PC-3 (cell line): ENCODE measurements at regions of chr2 and their contacts with region 1.

Region 1: DNA sequence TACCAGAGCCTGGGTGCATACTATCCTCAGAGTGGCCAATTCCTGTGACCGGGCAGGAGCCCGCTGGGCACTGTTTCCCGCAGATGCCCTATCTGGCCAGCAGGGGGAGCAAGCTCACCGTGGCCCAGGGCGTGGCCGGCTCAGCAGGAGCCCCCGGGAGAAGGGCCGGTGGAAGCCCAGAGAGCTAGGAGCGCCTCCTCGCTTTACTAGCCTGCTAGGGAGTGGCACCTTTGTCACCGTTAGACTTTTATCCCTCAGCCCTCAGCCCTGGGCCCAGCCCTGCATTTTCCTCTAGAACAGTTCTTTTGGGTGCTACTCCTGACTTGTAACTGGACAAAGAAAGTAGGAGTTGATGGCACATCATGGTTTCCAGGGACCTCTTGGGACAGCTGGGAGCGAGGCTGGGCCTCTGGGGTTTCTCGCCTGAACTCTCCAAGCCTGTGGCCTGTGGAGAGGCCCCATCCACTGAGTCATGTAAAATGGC is 24.0 kb downstream of the TMEM177 start:
- DNase-seq: peak; percentile 81
- ATAC-seq: peak; percentile 96
- H3K4me3 ChIP-seq: no peak overlapping the region
- H3K27ac ChIP-seq: no peak overlapping the region
- H3K4me1 ChIP-seq: peaks cover 4% of the 10 kb centered on the region; the same call in 1 of the 2 replicates
- H3K27me3 ChIP-seq: no peaks in the 10 kb centered on the region
- CTCF ChIP-seq: peak; percentile 97

Region 2: DNA sequence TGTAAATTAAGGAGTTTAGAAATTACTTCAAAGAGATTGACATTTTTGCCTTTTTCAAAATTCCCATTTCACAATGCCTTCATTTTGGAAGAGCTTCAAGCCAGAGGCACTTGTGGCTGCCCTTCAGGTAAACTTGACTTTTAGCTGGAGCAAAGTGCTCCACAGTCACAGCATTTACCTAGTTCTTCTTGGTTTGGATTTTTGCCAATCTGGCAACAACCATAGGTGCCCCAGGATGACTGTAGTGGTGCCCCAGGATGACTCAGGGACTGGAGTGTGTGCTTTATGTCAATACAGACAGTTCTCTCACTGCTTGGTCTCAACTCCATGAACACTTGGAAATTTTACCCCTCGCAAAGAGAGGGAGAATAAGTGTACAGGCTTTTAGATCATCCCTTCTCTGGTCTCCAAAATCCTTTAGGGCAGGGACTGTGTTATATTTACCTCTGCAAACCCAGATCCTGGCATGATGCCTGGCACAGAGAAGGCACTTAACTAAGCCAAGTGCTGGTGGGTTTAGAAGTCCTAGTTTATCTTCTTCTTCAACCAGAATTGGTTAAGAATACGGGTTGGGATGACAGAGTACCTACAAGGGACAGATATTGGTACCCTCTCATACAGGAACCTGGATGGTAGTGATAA is 41.5 kb after region 1 on chr2:
- CTCF ChIA-PET with region 1: interaction called, 4 read pairs
- POLR2A ChIA-PET with region 1: no interaction called
- intact Hi-C with region 1: loop called (anchors 2 kb)
- DNase-seq: peak; percentile 97
- ATAC-seq: peak; percentile 75
- H3K4me3 ChIP-seq: no peak overlapping the region
- H3K27ac ChIP-seq: peak overlapping the region; percentile 66
- H3K4me1 ChIP-seq: peaks cover 80% of the 10 kb centered on the region
- H3K27me3 ChIP-seq: no peaks in the 10 kb centered on the region
- CTCF ChIP-seq: no peak

Region 3: GRCh38 chr2:119753041-119753929 is 50.3 kb after region 1 on chr2:
- CTCF ChIA-PET with region 1: interaction called, 9 read pairs
- POLR2A ChIA-PET with region 1: no interaction called
- intact Hi-C with region 1: loop called (anchors 2 kb)
- DNase-seq: peak; percentile 68
- ATAC-seq: peak; percentile 58
- H3K4me3 ChIP-seq: no peak overlapping the region
- H3K27ac ChIP-seq: no peak overlapping the region
- H3K4me1 ChIP-seq: peaks cover 45% of the 10 kb centered on the region
- H3K27me3 ChIP-seq: no peaks in the 10 kb centered on the region
- CTCF ChIP-seq: peak; percentile 79

Region 4: DNA sequence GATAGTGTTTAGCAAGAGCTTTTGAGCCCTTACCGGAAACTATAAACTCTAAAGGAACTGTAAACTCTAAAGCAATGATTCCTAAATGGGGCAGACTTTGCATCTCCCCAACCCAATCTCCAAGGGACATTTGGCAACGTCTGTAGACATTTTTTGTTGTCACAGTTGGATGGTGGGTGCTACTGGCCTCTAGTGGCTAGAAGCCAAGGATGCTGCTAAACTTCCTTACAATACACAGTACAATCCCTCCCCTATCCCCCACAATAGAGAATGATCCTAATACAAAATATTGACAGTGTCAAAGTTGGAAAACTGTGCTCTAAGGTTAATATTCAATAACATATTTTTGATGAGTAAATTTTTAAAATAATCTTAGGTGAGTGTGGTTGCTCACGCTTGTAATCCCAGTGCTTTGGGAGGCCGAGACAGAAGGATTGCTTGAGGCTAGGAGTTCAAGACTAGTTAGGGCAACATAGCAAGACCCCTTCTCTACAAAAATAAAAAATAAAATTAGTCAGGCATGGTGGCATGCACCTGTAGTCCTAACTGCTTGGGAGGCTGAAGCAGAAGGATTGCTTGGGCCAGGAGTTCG is 123.5 kb after region 1 on chr2:
- CTCF ChIA-PET with region 1: interaction called, 7 read pairs
- POLR2A ChIA-PET with region 1: no interaction called
- intact Hi-C with region 1: loop called (anchors 1 kb)
- DNase-seq: peak; percentile 67
- ATAC-seq: peak; percentile 57
- H3K4me3 ChIP-seq: no peak overlapping the region
- H3K27ac ChIP-seq: no peak overlapping the region
- H3K4me1 ChIP-seq: peaks cover 30% of the 10 kb centered on the region
- H3K27me3 ChIP-seq: no peaks in the 10 kb centered on the region
- CTCF ChIP-seq: peak; percentile 88

Region 5: DNA sequence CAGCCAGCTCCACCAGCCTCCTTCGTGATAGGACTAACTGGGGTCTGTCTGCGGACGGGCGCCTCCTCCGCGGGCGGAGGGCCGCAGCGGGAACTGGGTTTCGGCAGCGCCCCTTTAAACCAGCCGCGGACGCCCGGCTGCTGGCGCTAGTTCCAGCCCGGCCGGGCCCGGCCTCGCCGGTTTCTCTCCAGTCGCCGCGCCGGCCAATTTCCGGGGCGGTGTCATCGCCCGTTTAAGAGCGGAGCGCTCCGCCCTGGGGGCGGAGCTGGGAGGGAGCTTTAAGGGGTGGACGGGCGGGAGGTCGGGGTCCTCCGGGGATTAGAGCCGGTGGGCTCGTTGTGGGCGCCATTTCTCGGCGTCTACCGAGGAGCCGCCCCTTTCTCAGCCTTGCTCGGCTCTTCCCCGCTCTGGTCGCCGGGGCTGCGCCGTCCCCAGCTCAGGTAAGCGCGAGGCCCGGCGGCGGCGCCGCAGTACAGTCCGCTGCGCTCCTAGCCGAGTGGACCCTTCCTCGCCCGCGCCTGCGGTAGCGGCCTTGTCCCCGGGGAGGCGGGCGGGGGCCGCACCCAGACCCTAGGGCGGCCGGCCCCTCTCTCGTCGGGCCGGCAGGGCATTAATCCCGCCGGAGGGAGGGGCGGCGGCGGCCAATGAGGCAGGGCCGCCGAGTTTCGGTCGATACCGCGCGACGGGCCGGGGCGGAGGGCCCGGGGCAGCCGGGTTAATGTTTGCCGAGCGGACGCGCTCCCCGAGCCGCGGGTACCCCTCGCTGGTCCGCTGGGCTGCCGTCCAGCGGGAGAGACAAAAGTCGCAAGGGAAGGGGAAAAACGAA is 310.0 kb after region 1 on chr2 and contains the start of gene EPB41L5:
- CTCF ChIA-PET with region 1: interaction called, 5 read pairs
- POLR2A ChIA-PET with region 1: no interaction called
- intact Hi-C with region 1: loop called (anchors 10 kb)
- DNase-seq: peak; percentile 96
- ATAC-seq: peak; percentile 91
- H3K4me3 ChIP-seq: peak within 1 kb of the TSS; percentile 80
- H3K27ac ChIP-seq: peak within 1 kb of the TSS; percentile 48
- H3K4me1 ChIP-seq: peaks cover 17% of the 10 kb centered on the region
- H3K27me3 ChIP-seq: no peaks in the 10 kb centered on the region
- CTCF ChIP-seq: 0 out of 2 replicates have a peak, but pooled peaks have one; percentile 8
- total RNA-seq, gene EPB41L5: 11.7 and 14.0 TPM in 2 replicates